ENCODE measurements at regions of chr5 and their contacts with region 1.

Region 1: GRCh38 chr5:60959156-60959555 is 14.2 kb downstream of the NDUFAF2 start:
- DNase-seq: no peak
- H3K4me3 ChIP-seq: no peak overlapping the region
- H3K27ac ChIP-seq: no peak overlapping the region
- H3K4me1 ChIP-seq: no peaks in the 10 kb centered on the region
- H3K27me3 ChIP-seq: no peaks in the 10 kb centered on the region
- CTCF ChIP-seq: peak in 2 of 3 experiments; percentile 23 to 49

Region 2: DNA sequence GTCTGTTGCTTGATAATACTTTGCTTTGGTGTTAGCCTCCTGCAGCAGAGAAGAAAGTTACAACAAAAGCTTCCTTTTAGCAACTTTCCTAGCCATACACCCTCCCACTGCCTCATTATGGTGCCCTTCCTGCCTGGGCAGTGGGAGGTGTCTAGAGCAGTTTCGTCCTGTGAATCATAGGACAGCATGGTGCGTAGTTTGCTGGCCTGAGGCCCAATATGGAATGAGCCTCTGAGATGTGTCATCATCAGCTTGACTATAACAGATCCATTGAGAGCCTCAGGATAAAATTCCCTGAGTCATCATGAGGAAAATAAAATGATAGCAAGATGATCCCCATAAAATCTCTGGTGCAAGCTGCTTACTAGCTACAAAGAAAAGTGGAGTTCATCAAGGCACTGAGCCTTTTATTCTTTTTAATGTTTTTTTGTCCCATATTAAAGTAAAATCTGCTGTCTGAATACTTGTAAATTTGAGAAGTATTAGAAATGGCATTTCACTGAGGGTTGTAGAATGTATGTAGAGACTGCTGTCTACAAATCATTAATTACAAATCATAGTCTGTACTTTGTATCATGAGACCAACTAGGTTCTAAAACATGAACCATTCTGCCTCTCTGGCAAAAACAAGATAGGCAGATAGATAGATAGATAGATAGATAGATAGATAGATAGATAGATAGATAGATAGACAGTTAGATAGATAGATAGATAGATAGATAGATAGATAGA is 762.6 kb before region 1 on chr5:
- intact Hi-C with region 1: no loop called
- DNase-seq: peak in 1 of 2 donors; percentile 67
- H3K4me3 ChIP-seq: no peak overlapping the region
- H3K27ac ChIP-seq: no peak overlapping the region
- H3K4me1 ChIP-seq: no peaks in the 10 kb centered on the region
- H3K27me3 ChIP-seq: no peaks in the 10 kb centered on the region
- CTCF ChIP-seq: no peak

Region 3: DNA sequence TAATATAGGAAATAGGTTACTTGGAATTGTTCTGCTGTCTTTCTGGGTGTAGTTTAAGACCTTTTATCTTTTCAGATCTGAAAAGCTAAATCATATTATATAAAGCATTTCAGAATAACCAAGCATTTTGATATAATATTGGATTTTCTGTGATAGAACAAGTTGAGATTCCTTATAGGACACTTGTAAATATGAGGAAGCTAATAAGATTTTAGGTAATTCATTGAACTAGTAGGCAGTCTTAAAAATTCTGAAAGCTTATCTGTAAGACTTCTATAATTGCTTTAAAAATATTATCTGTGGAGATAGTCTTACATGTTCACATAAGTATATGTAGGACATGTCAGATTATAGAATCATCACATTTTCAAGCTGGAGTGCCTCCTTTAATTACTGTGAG is 100.3 kb after region 1 on chr5:
- intact Hi-C with region 1: no loop called
- DNase-seq: no peak
- H3K4me3 ChIP-seq: no peak overlapping the region
- H3K27ac ChIP-seq: no peak overlapping the region
- H3K4me1 ChIP-seq: no peaks in the 10 kb centered on the region
- H3K27me3 ChIP-seq: no peaks in the 10 kb centered on the region
- CTCF ChIP-seq: no peak

Region 4: DNA sequence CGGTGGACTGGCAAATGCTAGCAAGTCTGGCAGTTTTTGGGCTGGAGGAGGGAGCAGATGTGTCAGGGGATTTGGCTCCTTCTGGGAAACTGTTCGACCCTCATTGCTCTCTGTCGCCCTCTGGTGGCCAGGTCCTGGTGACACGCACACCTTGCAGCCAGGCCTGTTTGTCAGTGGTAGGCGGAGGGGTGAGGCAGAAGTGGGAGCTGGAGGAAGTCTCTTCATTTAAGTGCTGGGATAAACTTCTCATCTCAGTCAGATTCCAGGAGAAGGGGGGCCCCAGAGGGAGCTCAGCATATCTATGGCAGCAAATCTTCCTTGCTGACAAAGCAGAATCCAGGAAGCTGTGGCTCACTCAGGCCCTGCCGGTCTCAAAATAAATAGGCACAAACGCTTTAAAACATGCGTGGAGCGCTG is 699.4 kb after region 1 on chr5:
- intact Hi-C with region 1: loop called (anchors 5 kb)
- DNase-seq: peak; percentile 23 to 80
- H3K4me3 ChIP-seq: no peak overlapping the region
- H3K27ac ChIP-seq: no peak overlapping the region
- H3K4me1 ChIP-seq: no peaks in the 10 kb centered on the region
- H3K27me3 ChIP-seq: no peaks in the 10 kb centered on the region
- CTCF ChIP-seq: peak; percentile 77 to 92 (median 91)

Region 5: GRCh38 chr5:62143268-62144229 is 1184.4 kb after region 1 on chr5:
- intact Hi-C with region 1: loop called (anchors 10 kb)
- DNase-seq: no peak
- H3K4me3 ChIP-seq: peak overlapping the region in 1 of 2 donors; percentile 54
- H3K27ac ChIP-seq: peak overlapping the region; percentile 7 to 29
- H3K4me1 ChIP-seq: peaks cover 0 to 9% of the 10 kb centered on the region in 2 donors
- H3K27me3 ChIP-seq: no peaks in the 10 kb centered on the region
- CTCF ChIP-seq: peak; percentile 3 to 54 (median 49)

Measured in ascending aorta (tissue), 2 donors.